ENCODE measurements at regions of chr2 and their contacts with region 1.

Region 1: GRCh38 chr2:72150157-72150865 is 2.6 kb upstream of the CYP26B1 start:
- DNase-seq: peak; percentile 77 to 81 (median 79)
- ATAC-seq: peak; percentile 82
- H3K4me3 ChIP-seq: no peak overlapping the region
- H3K27ac ChIP-seq: no peak overlapping the region
- H3K4me1 ChIP-seq: peaks cover 37% of the 10 kb centered on the region
- H3K27me3 ChIP-seq: peaks cover 0 to 40% of the 10 kb centered on the region in 2 donors
- CTCF ChIP-seq: peak; percentile 70 to 89 (median 84)
- POLR2A ChIP-seq: no peak

Region 2: DNA sequence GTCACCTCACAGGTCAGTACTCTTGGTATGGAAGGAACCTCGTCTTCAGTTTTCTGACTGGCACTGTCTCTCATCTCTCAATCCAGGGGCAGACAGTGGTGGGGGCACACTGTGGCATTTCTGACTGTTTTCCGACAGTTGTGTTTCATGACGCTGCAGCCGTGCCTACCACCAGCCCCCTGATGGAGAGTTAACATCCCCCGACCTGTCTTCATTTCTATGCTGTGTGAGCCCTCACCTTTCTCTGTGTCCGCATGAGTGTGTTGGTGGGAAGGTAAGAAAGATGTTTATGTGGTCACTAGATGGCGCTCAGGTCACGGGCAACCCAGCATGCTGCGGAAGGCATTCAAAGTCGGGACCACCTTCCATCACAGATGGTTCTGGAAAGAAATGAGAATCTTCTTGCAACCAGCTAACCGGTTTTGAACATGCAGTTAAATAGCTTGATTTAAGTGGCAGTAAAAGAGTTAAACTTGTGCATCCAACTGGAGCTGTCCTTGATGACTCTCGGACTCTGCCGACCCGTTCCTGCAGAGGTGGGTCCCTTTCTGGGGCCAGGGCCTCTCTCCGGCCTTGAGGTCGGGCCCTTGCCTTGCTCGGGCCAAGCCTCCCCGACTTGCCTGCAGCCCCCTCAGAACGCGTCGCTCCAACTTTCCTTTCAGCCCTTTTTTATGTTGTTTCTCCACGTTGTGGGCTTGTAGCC is 604.6 kb before region 1 on chr2:
- intact Hi-C with region 1: loop called (anchors 5 kb)
- DNase-seq: peak; percentile 51 to 59 (median 56)
- ATAC-seq: peak; percentile 62
- H3K4me3 ChIP-seq: no peak overlapping the region
- H3K27ac ChIP-seq: no peak overlapping the region
- H3K4me1 ChIP-seq: peaks cover 9% of the 10 kb centered on the region
- H3K27me3 ChIP-seq: no peaks in the 10 kb centered on the region
- CTCF ChIP-seq: peak; percentile 35 to 77 (median 65)
- POLR2A ChIP-seq: no peak

Region 3: GRCh38 chr2:71923887-71924533 is 226.3 kb before region 1 on chr2:
- intact Hi-C with region 1: loop called (anchors 5 kb)
- DNase-seq: peak; percentile 65 to 73 (median 69)
- ATAC-seq: no peak
- H3K4me3 ChIP-seq: no peak overlapping the region
- H3K27ac ChIP-seq: no peak overlapping the region
- H3K4me1 ChIP-seq: no peaks in the 10 kb centered on the region
- H3K27me3 ChIP-seq: no peaks in the 10 kb centered on the region
- CTCF ChIP-seq: peak; percentile 56 to 88 (median 77)
- POLR2A ChIP-seq: no peak